Breast epithelium (tissue), 4 donors: ENCODE measurements at regions of chr10 and their contacts with region 1.

Region 1: DNA sequence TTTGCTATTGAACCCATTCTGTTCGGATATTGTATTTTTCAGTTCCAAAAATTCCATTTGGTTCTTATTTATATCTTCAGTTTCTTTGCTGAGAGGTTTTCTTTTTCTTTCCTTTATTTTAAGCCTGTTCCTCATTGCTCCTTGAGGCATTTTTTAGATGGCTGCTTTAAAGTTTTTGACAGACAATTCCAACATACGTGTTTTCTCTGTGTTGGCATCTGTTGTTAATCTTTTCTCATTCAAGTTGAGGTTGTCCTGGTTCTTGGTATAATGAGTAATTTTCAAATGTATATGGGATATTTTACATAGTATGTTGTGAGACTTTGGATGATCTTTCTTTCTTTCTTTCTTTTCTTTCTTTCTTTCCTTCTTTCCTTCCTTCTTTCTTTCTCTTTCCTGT is 1078.0 kb upstream of the CELF2 start:
- DNase-seq: no peak
- H3K4me3 ChIP-seq: no peak overlapping the region
- H3K27ac ChIP-seq: no peak overlapping the region
- H3K4me1 ChIP-seq: no peaks in the 10 kb centered on the region
- H3K27me3 ChIP-seq: no peaks in the 10 kb centered on the region
- CTCF ChIP-seq: no peak
- POLR2A ChIP-seq: no peak

Region 2: GRCh38 chr10:9922126-9922870 is 17.4 kb before region 1 on chr10:
- intact Hi-C with region 1: no loop called
- DNase-seq: no peak
- H3K4me3 ChIP-seq: no peak overlapping the region
- H3K27ac ChIP-seq: no peak overlapping the region
- H3K4me1 ChIP-seq: no peaks in the 10 kb centered on the region
- H3K27me3 ChIP-seq: no peaks in the 10 kb centered on the region
- CTCF ChIP-seq: no peak
- POLR2A ChIP-seq: no peak

Region 3: GRCh38 chr10:11760861-11761260 is 1821.1 kb after region 1 on chr10:
- intact Hi-C with region 1: loop called (anchors 10 kb)
- DNase-seq: no peak
- H3K4me3 ChIP-seq: no peak overlapping the region
- H3K27ac ChIP-seq: no peak overlapping the region
- H3K4me1 ChIP-seq: no peaks in the 10 kb centered on the region
- H3K27me3 ChIP-seq: no peaks in the 10 kb centered on the region
- CTCF ChIP-seq: no peak
- POLR2A ChIP-seq: no peak